Endothelial cell of umbilical vein (primary cell): ENCODE measurements at regions of chr1 and their contacts with region 1.

Region 1: GRCh38 chr1:93629099-93630059 is 52.3 kb downstream of the BCAR3 start:
- DNase-seq: peak; percentile 82
- H3K4me3 ChIP-seq: no peak overlapping the region
- H3K27ac ChIP-seq: peak overlapping the region; percentile 19
- H3K4me1 ChIP-seq: peaks cover 47% of the 10 kb centered on the region
- H3K27me3 ChIP-seq: no peaks in the 10 kb centered on the region
- CTCF ChIP-seq: peak; percentile 58 to 64
- POLR2A ChIP-seq: no peak

Region 2: GRCh38 chr1:93345633-93346420 is 283.6 kb before region 1 on chr1 and contains the start of gene DR1:
- CTCF ChIA-PET with region 1: no interaction called
- POLR2A ChIA-PET with region 1: no interaction called
- dilution Hi-C with region 1: no loop called
- intact Hi-C with region 1: loop called (anchors 5 kb)
- DNase-seq: peak; percentile 94
- H3K4me3 ChIP-seq: peak within 1 kb of the TSS; percentile 89 to 99 (median 97)
- H3K27ac ChIP-seq: peak within 1 kb of the TSS; percentile 88
- H3K4me1 ChIP-seq: peaks cover 22% of the 10 kb centered on the region
- H3K27me3 ChIP-seq: no peaks in the 10 kb centered on the region
- CTCF ChIP-seq: no peak
- POLR2A ChIP-seq: peak; percentile 93
- total RNA-seq, gene DR1: 49.4 and 52.2 TPM in 2 replicates

Region 3: DNA sequence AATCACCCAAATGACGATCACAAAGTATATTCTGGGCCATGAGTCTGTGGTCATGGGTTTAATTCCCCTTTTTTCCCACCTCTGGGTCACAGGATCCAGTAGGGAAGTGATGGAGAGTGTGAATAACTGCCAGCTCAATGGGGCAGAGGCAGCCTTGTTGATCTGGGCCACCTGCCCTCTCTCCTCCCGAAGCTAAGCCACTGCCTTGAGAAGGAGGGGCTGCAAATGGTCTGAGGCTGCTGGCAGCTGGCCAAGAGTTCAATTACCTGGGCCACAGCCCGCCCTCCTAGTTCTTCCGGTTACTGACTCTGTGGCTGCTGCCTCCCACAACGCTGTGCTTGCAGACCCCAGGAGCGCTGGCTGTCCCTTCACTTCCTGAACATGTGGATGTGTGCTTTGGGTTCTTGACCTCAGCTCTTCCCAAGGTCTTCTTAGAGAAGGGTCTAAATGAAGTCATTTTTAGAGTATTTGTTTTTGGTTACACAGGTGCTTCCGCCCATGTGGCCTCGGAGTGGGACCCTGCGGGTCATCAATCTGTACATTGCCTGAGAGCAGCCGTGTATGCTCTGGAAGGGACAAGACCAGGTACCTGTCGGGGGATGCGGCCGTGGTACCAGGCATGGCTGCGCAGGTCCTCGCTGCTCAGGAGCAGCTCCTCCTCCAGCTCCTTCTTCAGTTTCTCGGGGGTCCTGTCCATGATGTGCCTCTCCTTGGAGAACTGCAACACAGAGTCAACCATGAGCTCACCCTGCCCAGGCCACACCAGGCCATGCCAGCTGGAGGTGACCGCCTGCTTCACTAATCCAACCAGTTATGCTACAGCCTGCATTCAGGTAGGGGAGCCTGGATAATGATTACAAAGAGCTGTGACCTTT is 37.5 kb before region 1 on chr1:
- CTCF ChIA-PET with region 1: interaction called, 16 read pairs
- POLR2A ChIA-PET with region 1: no interaction called
- dilution Hi-C with region 1: no loop called
- intact Hi-C with region 1: loop called (anchors 2 kb)
- DNase-seq: no peak
- H3K4me3 ChIP-seq: no peak overlapping the region
- H3K27ac ChIP-seq: no peak overlapping the region
- H3K4me1 ChIP-seq: peaks cover 32% of the 10 kb centered on the region
- H3K27me3 ChIP-seq: no peaks in the 10 kb centered on the region
- CTCF ChIP-seq: no peak
- POLR2A ChIP-seq: no peak

Region 4: DNA sequence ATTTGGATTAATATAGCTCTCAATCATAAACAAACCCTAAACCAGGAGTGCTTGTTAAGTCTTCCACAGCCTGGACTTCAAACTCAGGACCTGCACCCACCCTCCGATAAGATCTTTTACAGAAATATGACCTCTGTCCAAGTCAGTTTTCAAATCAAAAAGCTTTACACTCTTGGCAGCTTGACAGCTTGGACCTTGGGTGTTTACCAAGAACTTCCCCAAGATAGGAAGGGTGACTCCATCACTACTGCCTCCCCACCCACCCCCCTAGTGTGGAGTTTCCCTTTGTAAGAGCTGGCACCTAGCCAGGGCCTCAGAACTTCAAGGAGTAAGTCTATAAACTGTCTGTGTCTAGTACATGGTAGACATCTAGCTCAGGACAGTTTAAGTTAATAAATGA is 42.7 kb after region 1 on chr1:
- CTCF ChIA-PET with region 1: interaction called, 98 read pairs
- POLR2A ChIA-PET with region 1: interaction called, 6 read pairs
- dilution Hi-C with region 1: no loop called
- intact Hi-C with region 1: loop called (anchors 1 kb)
- DNase-seq: peak; percentile 98
- H3K4me3 ChIP-seq: no peak overlapping the region
- H3K27ac ChIP-seq: peak overlapping the region; percentile 92
- H3K4me1 ChIP-seq: peaks cover 86% of the 10 kb centered on the region
- H3K27me3 ChIP-seq: no peaks in the 10 kb centered on the region
- CTCF ChIP-seq: no peak
- POLR2A ChIP-seq: peak; percentile 51

Region 5: GRCh38 chr1:93734999-93735398 is 105.6 kb after region 1 on chr1:
- CTCF ChIA-PET with region 1: interaction called, 3 read pairs
- POLR2A ChIA-PET with region 1: no interaction called
- dilution Hi-C with region 1: no loop called
- intact Hi-C with region 1: loop called (anchors 5 kb)
- DNase-seq: no peak
- H3K4me3 ChIP-seq: no peak overlapping the region
- H3K27ac ChIP-seq: no peak overlapping the region
- H3K4me1 ChIP-seq: no peaks in the 10 kb centered on the region
- H3K27me3 ChIP-seq: no peaks in the 10 kb centered on the region
- CTCF ChIP-seq: peak; percentile 30 to 35
- POLR2A ChIP-seq: no peak

Region 6: DNA sequence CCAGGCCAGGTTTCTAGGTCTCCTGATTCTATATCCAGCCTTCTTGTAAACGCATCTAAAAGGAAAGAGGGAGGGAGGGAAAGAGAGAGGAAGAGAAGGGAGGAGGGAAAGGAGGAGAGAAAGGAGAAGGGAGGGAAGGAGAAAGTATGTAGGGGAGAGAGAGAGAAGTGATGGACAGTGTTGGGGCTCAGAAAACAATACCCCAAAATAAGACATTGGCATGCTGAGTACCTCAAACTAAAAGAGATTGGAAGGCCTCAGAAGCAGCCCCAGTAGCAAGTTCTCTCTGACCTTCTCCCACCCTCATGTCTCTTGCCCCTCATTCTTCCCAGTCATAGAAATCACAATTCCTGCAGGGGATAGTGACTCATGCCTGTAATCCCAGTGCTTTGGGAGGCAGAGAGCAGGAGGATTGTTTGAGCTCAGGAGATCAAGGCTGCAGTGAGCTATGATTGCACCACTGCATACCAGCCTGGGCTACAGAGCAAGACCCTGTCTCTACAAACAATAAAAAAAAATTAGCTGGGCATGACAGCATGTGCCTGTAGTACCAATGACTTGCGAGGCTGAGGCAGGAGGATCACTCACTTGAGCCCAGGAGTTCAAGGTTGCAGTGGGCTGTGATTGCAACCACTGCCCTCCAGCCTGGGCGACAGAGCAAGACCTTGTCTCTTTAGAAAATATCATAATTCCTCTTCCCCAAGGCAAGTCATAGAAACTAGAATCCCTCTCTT is 198.4 kb after region 1 on chr1:
- CTCF ChIA-PET with region 1: interaction called, 16 read pairs
- POLR2A ChIA-PET with region 1: no interaction called
- dilution Hi-C with region 1: no loop called
- intact Hi-C with region 1: no loop called
- DNase-seq: peak; percentile 42
- H3K4me3 ChIP-seq: no peak overlapping the region
- H3K27ac ChIP-seq: no peak overlapping the region
- H3K4me1 ChIP-seq: peaks cover 3% of the 10 kb centered on the region
- H3K27me3 ChIP-seq: no peaks in the 10 kb centered on the region
- CTCF ChIP-seq: no peak
- POLR2A ChIP-seq: no peak